ENCODE measurements at regions of chr6 and their contacts with region 1.

Region 1: GRCh38 chr6:20401205-20402091 is at the start of gene E2F3:
- DNase-seq: peak; percentile 100
- H3K4me3 Mint-ChIP-seq: peak within 1 kb of the TSS; percentile 95
- H3K27ac Mint-ChIP-seq: peak within 1 kb of the TSS; percentile 99
- H3K4me1 Mint-ChIP-seq: peaks cover 18% of the 10 kb centered on the region
- H3K27me3 Mint-ChIP-seq: no peaks in the 10 kb centered on the region
- total RNA-seq, gene E2F3: 12.7 to 13.1 TPM

Region 2: GRCh38 chr6:19999319-20000191 is 401.9 kb before region 1 on chr6:
- CTCF ChIA-PET with region 1: no interaction called
- intact Hi-C with region 1: loop called (anchors 1 kb)
- DNase-seq: peak; percentile 22
- H3K4me3 Mint-ChIP-seq: no peak overlapping the region
- H3K27ac Mint-ChIP-seq: no peak overlapping the region
- H3K4me1 Mint-ChIP-seq: no peaks in the 10 kb centered on the region
- H3K27me3 Mint-ChIP-seq: no peaks in the 10 kb centered on the region

Region 3: DNA sequence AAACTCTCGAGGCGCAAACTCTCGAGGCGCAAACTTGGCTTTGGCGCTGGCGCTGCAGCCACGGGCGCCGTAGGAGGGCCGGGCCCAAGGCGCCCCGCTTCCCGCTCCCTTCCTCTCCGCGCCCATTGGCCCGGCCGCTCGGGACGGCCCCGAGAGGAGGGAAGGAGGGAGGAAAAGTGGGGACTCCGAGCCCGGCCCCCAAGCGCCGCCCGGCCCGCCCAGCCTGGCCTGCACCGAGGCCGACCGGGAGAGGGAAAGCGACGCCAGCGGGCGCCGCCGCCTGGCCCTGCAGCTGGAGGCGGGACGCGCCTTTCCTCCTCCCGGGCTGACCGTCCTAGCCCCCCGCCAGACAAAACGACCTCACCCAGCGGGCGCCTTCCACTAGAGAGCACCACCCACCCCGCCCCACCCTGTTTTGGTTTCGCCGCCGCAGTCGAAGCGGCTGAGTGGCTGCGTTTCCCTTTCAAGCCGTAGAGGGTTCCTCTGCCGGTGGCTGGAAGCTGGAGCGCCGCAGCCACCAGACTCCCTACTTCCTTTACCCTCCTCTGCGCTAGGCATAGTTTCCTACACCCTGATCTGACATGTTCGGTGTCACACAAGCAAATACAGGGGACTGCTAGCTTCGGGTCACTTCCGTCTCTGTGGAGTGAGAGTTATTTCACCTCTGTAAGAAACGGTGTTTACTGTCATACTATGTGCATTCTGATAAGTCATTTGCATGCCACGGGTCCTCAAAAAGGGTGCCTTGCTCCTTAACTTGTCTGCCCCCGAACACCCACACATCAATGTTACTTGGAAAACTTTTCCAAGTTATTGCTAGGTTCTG is 188.8 kb before region 1 on chr6 and contains the start of gene MBOAT1:
- CTCF ChIA-PET with region 1: no interaction called
- intact Hi-C with region 1: loop called (anchors 1 kb)
- DNase-seq: peak; percentile 71
- H3K4me3 Mint-ChIP-seq: peak within 1 kb of the TSS; percentile 83
- H3K27ac Mint-ChIP-seq: peak within 1 kb of the TSS; percentile 85
- H3K4me1 Mint-ChIP-seq: peaks cover 30% of the 10 kb centered on the region
- H3K27me3 Mint-ChIP-seq: no peaks in the 10 kb centered on the region
- total RNA-seq, gene MBOAT1: 6.3 to 7.3 TPM

Region 4: GRCh38 chr6:20335872-20336271 is 65.6 kb before region 1 on chr6:
- CTCF ChIA-PET with region 1: interaction called, 5 read pairs
- intact Hi-C with region 1: loop called (anchors 2 kb)
- DNase-seq: no peak
- H3K4me3 Mint-ChIP-seq: peak overlapping the region; percentile 71
- H3K27ac Mint-ChIP-seq: peak overlapping the region; percentile 79
- H3K4me1 Mint-ChIP-seq: peaks cover 15% of the 10 kb centered on the region
- H3K27me3 Mint-ChIP-seq: no peaks in the 10 kb centered on the region

Region 5: GRCh38 chr6:20417819-20418218 is 16.4 kb after region 1 on chr6:
- CTCF ChIA-PET with region 1: interaction called, 11 read pairs
- intact Hi-C with region 1: loop called (anchors 1 kb)
- DNase-seq: no peak
- H3K4me3 Mint-ChIP-seq: no peak overlapping the region
- H3K27ac Mint-ChIP-seq: no peak overlapping the region
- H3K4me1 Mint-ChIP-seq: peaks cover 38% of the 10 kb centered on the region
- H3K27me3 Mint-ChIP-seq: no peaks in the 10 kb centered on the region

Region 6: DNA sequence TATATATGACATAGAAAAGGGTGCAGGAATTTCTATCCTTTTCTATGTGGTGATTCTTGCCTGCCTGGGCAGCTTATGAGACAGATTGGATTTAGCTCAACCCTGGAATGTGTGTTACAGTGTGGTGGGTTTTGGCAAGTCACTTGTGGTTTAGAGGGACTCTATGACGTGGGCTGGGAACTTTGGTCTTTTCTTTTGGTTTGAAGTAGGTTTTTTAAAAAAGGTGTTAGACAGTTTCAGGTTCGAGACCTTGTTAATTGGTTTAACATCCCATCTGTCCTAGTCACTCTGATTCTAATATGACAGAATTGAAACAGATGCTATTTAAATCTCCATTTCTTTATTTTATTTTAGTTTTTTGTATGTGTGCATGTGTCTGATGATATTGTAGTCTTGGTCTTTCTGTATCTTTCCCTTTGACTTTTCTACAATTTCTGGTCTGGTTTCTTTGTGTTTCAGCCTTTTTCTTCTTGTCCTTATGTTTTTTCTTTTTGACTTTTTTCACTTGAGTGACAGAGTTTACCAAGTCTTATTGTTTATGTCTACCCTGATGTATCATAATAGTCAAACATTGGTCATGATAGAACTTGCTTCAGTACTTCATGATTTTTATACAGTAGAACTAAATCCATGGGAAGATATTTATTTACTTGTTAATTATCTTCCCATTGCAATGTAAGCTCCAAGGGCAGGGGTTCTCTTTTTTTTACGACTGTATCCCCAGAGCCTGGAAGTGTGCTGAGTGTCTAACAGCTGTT is 307.1 kb after region 1 on chr6:
- CTCF ChIA-PET with region 1: no interaction called
- intact Hi-C with region 1: loop called (anchors 1 kb)
- DNase-seq: peak; percentile 62
- H3K4me3 Mint-ChIP-seq: no peak overlapping the region
- H3K27ac Mint-ChIP-seq: no peak overlapping the region
- H3K4me1 Mint-ChIP-seq: peaks cover 54% of the 10 kb centered on the region
- H3K27me3 Mint-ChIP-seq: no peaks in the 10 kb centered on the region

Region 7: DNA sequence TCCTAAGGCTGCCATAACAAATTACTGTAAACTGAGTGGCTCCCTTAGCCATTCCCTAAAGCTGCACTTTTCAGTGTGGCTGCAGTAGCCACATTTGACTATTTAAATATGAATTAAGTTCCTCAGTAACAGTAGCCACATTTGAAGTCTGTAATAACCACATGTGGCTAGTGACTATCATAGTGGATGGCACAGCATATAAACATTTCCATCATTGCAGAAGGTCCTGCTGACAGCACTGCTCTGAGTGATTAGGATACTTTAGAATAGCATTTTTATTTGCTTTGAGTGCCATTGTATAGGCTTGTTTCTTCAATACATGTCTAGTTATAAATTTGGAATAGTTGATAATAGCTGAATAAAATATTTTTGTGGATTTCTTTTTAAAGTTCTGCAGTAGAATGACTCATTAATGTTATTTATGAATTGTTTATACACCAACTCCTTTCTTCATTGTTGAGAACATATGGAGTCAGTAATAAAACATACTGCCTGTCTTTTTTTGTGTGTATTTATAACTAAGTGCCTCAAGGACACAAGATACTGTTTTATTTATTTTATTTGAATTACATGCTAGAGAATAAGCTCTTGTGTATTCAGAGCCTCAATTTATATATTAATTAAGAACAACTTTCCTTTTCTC is 350.0 kb after region 1 on chr6:
- CTCF ChIA-PET with region 1: no interaction called
- intact Hi-C with region 1: no loop called
- DNase-seq: no peak
- H3K4me3 Mint-ChIP-seq: no peak overlapping the region
- H3K27ac Mint-ChIP-seq: no peak overlapping the region
- H3K4me1 Mint-ChIP-seq: peaks cover 20% of the 10 kb centered on the region
- H3K27me3 Mint-ChIP-seq: no peaks in the 10 kb centered on the region